Activated CD4-positive, alpha-beta T cell treated with anti-CD3 and anti-CD28 coated beads for 36 hours (primary cell): ENCODE measurements at regions of chr1 and their contacts with region 1.

Region 1: DNA sequence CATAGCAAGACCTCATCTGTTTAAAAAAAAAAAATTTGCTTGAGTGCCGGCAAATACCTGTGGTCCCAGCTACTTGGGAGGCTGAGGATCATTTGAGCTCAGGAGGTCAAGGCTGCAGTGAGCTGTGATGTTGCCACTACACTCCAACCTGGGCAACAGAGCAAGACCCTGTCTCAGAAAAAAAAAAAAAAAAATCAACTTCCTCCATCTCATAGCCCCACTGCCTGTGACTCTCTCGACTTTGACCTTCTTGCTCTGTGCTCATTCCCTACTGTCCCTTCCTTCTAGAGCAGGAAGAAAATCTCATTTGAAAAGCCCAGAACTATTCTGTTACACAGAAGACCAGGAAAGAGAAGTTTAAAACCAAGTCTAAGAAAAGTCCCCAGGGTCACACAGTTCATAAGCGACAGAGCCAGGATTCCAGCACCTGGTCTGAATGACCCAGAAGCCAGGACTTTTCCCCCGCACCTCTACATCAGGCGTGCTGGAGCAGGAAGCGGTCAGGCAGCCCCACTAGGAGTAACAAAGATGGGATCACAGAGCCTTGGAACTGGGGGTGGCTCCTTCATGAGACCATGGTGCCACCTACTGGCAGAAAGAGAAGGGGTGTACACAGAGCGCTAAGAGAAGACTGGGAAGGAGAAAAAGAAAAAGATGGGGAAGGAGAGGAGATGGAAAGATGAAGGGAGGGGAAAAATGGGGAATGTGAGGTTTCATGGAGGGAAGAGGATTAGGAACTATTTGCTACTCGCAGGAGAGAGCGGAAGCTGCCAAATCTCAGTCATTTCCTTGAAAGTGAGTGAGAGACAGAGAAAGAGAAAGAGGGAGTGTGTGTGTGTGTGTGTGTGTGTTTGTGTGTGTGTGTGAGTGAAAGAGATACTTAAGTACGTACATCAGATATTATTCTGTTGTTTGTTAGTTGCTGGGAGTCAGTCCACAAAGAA is 3.1 kb upstream of the P3R3URF start:
- DNase-seq: peak; percentile 80
- ATAC-seq: peak; percentile 83
- H3K4me3 Mint-ChIP-seq: no peak overlapping the region
- H3K27ac Mint-ChIP-seq: no peak overlapping the region
- H3K4me1 Mint-ChIP-seq: peaks cover 7% of the 10 kb centered on the region
- H3K27me3 Mint-ChIP-seq: no peaks in the 10 kb centered on the region

Region 2: DNA sequence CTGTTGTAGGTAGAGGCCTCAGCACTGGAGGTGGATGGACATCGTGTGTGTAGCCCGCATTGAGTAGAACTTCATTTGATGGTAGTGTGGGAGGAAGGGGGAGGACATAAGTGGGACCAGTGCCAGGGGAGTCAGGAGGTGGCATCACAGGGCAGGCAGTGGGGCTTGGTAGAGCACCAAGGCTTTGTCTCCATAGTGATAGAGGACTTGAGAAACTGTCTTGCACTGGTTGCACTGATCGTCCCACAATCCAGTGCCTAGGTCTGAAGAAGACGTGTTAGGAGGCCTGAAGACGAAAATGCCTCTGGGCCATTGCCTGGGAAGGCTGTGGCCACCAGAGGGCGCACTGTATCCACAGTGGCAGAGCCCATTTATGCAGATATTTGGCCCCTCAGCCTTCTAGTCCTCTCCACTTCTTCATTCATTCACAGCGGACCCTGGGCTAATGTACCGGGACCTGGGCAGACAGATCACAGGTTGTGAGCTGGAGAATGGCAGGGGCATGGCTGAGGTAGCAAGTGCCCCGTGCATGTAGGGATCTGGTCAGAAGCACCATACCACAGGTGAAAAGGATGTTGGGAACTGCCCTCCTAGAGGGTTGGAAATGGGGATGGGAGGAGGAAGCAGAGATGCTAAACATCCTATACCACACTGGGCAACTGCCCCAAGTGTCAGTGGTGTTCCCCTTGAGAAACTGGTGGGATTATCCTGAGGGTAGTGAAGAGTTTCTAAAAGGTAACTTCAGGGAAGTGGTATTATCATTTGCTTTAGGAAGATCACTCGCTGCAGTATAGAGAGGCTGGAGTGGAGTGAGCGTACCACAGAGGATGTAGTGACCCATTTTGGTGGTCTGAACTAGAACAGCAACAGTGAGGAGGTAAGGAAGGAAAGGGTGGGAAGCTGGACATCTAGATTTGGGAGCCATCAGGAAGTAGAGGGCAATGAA is 142.2 kb before region 1 on chr1:
- CTCF ChIA-PET with region 1: interaction called, 58 read pairs
- POLR2A ChIA-PET with region 1: no interaction called
- intact Hi-C with region 1: loop called (anchors 1 kb)
- DNase-seq: peak; percentile 92
- ATAC-seq: peak; percentile 84
- H3K4me3 Mint-ChIP-seq: no peak overlapping the region
- H3K27ac Mint-ChIP-seq: no peak overlapping the region
- H3K4me1 Mint-ChIP-seq: no peaks in the 10 kb centered on the region
- H3K27me3 Mint-ChIP-seq: no peaks in the 10 kb centered on the region

Region 3: GRCh38 chr1:46166521-46167462 is 12.6 kb before region 1 on chr1:
- CTCF ChIA-PET with region 1: interaction called, 10 read pairs
- POLR2A ChIA-PET with region 1: interaction called, 5 read pairs
- intact Hi-C with region 1: no loop called
- DNase-seq: peak; percentile 71
- ATAC-seq: peak; percentile 76
- H3K4me3 Mint-ChIP-seq: peak overlapping the region; percentile 65
- H3K27ac Mint-ChIP-seq: peak overlapping the region; percentile 85
- H3K4me1 Mint-ChIP-seq: peaks cover 17% of the 10 kb centered on the region
- H3K27me3 Mint-ChIP-seq: no peaks in the 10 kb centered on the region

Region 4: GRCh38 chr1:46772571-46772970 is 593.2 kb after region 1 on chr1:
- CTCF ChIA-PET with region 1: no interaction called
- POLR2A ChIA-PET with region 1: no interaction called
- intact Hi-C with region 1: no loop called
- DNase-seq: no peak
- ATAC-seq: no peak
- H3K4me3 Mint-ChIP-seq: no peak overlapping the region
- H3K27ac Mint-ChIP-seq: no peak overlapping the region
- H3K4me1 Mint-ChIP-seq: no peaks in the 10 kb centered on the region
- H3K27me3 Mint-ChIP-seq: peaks cover 8% of the 10 kb centered on the region